A549 (cell line): ENCODE measurements at regions of chr11 and their contacts with region 1.

Region 1: DNA sequence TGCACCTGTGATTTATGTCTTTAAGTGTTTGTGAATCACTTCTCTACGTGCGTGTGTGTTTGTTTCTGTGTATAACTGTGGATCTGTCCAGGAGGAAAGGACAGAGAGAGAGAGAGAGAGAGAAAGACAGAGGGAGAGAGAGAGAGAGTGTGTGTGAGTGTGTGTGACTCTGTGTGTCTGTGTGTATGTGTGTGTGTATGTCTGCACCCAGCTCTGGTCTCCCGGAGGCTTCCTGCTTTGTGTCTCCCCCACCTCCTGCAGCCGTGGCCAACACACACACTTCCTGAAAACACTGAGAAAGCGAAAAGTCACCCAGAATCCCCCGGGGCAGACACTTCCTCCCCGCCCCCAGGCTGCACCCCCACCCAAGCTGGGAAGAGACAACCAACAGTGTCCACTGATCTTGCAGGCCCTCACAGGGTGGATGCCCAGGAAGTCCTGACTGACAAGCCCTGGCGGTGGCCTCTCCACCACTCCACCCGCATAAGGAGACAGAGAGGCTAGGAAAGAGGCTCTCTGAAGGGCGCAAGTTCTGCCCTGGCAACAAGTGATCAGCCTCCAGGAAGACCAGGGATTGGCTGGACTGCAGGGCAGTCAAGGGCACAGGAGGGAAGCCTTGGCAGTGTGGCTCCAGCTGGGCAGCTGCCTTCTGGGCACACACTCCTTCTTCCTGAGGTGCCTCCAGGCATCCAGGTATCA is 30.0 kb downstream of the ARAP1 start:
- DNase-seq: peak; percentile 87 to 97
- ATAC-seq: peak; percentile 95 to 97
- H3K4me3 ChIP-seq: peak overlapping the region; percentile 45
- H3K27ac ChIP-seq: peak overlapping the region; percentile 94 to 97
- H3K4me1 ChIP-seq: peaks cover 35% of the 10 kb centered on the region
- CTCF ChIP-seq: no peak
- EP300 ChIP-seq: no peak
- POLR2A ChIP-seq: peak; percentile 54
- RAD21 ChIP-seq: no peak

Region 2: DNA sequence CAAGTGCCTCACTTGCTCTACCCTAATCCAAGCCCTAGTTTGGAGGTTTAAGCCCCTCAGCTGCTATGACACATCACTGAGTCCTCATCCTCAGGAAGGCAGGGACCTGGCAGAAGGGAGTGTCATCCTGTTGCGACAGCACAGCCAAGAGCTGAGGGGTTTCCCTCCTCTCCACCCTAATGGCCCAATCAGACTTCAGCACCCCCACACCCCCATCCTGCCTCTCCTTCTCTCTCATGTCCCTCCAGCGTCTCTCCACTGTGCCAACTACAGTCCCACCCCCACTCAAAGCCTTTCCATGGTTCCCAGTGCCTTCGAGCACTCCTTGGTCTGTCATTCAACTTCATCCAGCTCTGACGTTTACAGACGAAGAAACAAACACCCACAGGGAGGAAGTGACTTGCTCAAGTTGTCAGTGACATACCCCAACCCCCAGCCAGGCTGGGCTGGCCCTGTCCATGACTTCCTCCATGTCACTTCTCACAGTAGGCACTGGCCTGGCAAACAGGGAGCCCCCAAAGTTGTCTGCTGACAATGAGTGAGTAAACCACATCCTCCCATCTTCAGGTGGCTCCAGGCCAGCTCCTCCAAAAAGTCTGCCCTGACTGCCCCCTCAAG is 14.4 kb after region 1 on chr11:
- CTCF ChIA-PET with region 1: interaction called, 26 read pairs
- POLR2A ChIA-PET with region 1: no interaction called
- DNase-seq: peak; percentile 56 to 67
- ATAC-seq: peak; percentile 60 to 71
- H3K4me3 ChIP-seq: no peak overlapping the region
- H3K27ac ChIP-seq: peak overlapping the region; percentile 44 to 76
- H3K4me1 ChIP-seq: peaks cover 37% of the 10 kb centered on the region
- CTCF ChIP-seq: no peak
- EP300 ChIP-seq: no peak
- POLR2A ChIP-seq: no peak
- RAD21 ChIP-seq: no peak

Region 3: GRCh38 chr11:72766152-72766902 is 44.1 kb after region 1 on chr11:
- CTCF ChIA-PET with region 1: interaction called, 20 read pairs
- POLR2A ChIA-PET with region 1: no interaction called
- DNase-seq: no peak
- ATAC-seq: no peak; a peak in 1 of 6 replicates
- H3K4me3 ChIP-seq: no peak overlapping the region
- H3K27ac ChIP-seq: no peak overlapping the region
- H3K4me1 ChIP-seq: peaks cover 1% of the 10 kb centered on the region; the same call in 1 of the 3 replicates
- CTCF ChIP-seq: no peak
- EP300 ChIP-seq: no peak
- POLR2A ChIP-seq: no peak
- RAD21 ChIP-seq: no peak

Region 4: GRCh38 chr11:72787216-72788104 is 65.3 kb after region 1 on chr11:
- CTCF ChIA-PET with region 1: interaction called, 162 read pairs
- POLR2A ChIA-PET with region 1: interaction called, 8 read pairs
- DNase-seq: peak in 1 of 2 experiments; percentile 51
- ATAC-seq: peak; percentile 51 to 77; a peak in 5 of 6 replicates
- H3K4me3 ChIP-seq: no peak overlapping the region
- H3K27ac ChIP-seq: no peak overlapping the region
- H3K4me1 ChIP-seq: peaks cover 1% of the 10 kb centered on the region; the same call in 2 of the 3 replicates
- CTCF ChIP-seq: no peak
- EP300 ChIP-seq: no peak
- POLR2A ChIP-seq: no peak
- RAD21 ChIP-seq: no peak

Region 5: GRCh38 chr11:72814286-72815109 is 92.3 kb after region 1 on chr11 and contains the start of gene ATG16L2:
- CTCF ChIA-PET with region 1: interaction called, 28 read pairs
- POLR2A ChIA-PET with region 1: interaction called, 10 read pairs
- DNase-seq: peak; percentile 90 to 93
- ATAC-seq: peak; percentile 72 to 85
- H3K4me3 ChIP-seq: peak within 1 kb of the TSS; percentile 58
- H3K27ac ChIP-seq: peak within 1 kb of the TSS; percentile 78 to 95
- H3K4me1 ChIP-seq: peaks cover 22% of the 10 kb centered on the region
- CTCF ChIP-seq: peak; percentile 12; the same call in 1 of the 3 replicates
- EP300 ChIP-seq: peak in 1 of 2 experiments; percentile 25; a peak in 1 of 5 replicates
- POLR2A ChIP-seq: peak; percentile 93
- RAD21 ChIP-seq: peak in 1 of 2 experiments; percentile 33; a peak in 3 of 5 replicates
- polyA plus RNA-seq, gene ATG16L2: 6.1 and 6.2 TPM in 2 replicates

Region 6: DNA sequence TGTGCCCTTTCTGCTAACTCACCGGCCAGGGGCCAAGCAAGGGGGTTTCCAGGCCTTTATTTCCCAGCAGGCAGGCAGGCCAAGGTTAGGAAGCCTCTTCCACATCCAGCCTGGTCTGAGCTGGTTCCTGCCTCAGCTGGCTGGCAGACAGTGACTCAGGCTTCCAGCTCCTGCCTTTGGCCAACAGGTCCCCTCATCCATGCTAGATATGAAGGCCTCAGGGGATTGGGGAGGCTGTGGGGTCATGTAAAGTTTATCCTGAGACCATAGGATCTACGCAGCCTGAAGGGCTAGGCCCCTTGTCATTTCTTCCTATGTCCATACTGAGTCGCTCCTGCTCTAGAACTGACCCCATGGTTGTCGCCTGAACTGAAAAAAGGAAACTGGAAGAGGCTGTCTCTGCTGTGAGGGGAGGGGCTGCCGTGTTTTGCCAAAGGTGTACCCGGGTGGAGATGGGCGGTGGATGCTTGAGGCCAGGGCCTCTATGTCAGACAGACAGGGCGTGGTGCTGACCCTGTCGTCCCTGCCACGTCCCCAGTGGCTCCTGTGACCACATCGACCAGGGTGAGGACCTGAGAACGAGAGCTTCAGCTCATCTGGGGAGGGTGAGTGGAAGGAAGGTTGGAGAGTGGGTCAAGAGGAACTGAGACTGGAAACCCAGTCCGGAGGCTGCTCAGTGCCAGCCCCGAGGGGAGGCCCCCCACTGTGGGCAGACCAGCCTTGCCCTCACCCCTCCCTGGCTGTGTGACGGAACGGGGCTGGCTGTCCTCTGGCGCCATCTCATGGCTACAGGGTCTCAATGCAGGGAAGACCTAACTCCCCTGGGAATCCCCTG is 566.9 kb after region 1 on chr11:
- CTCF ChIA-PET with region 1: interaction called, 12 read pairs
- POLR2A ChIA-PET with region 1: no interaction called
- DNase-seq: peak; percentile 86 to 91
- ATAC-seq: peak; percentile 72 to 84
- H3K4me3 ChIP-seq: peak overlapping the region; percentile 20; the same call in 1 of the 3 replicates
- H3K27ac ChIP-seq: peak overlapping the region; percentile 80 to 90
- H3K4me1 ChIP-seq: peaks cover 36% of the 10 kb centered on the region
- CTCF ChIP-seq: peak; percentile 96
- EP300 ChIP-seq: no peak
- POLR2A ChIP-seq: no peak
- RAD21 ChIP-seq: peak; percentile 98